AG04449 (cell line): ENCODE measurements at regions of chr17 and their contacts with region 1.

Region 1: DNA sequence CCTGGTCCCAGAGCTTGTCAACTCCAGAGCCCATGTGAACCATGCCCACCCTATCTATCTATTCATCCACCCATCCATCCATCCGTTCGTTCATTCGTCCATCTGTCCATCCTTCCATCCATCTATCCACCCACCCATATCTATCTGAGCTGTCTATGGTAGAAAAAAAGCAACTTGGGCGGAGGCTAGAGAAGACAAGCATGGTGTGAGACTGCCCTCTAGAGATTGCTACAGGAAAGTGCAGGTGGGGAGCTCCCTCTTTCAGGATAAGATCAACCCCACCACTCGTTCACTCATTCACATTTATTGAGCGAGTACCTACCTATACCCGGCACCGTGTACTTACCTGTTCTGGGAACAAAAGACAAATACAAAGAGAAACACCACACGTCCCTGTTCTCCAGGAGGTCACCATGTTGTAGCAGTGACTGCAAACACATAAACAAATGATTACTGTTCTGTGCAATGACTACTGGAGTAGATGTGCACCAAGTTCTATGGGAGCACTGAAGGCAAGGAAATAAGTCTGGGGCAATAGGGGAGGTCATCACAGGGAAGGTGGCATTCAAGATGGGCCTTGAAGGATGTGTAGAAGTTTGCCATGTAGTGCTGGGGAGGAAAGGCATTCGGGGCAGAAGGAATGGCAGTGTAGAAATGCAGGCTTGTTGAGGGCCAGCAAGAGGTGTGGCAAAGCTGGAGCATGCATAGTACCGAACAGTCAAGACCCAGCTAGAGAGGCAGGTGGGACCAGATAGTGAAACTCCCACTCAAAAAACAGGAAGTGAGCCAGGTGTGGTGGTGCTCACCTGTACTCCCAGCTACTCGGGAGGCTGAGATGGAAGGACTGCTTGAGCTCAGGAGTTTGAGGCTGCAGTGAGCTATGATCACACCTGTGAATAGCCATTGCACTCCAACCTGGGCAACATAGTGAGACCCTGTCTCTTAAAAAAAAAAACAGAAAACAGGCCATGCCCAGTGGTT is 13.4 kb upstream of the ATP5MC1 start:
- DNase-seq: no peak
- H3K4me3 ChIP-seq: no peak overlapping the region
- CTCF ChIP-seq: peak; percentile 85

Region 2: GRCh38 chr17:48678141-48678971 is 200.9 kb before region 1 on chr17:
- CTCF ChIA-PET with region 1: interaction called, 260 read pairs
- POLR2A ChIA-PET with region 1: no interaction called
- DNase-seq: no peak
- H3K4me3 ChIP-seq: peak overlapping the region; percentile 30
- CTCF ChIP-seq: peak; percentile 93

Region 3: GRCh38 chr17:48724251-48725003 is 154.8 kb before region 1 on chr17:
- CTCF ChIA-PET with region 1: interaction called, 127 read pairs
- POLR2A ChIA-PET with region 1: no interaction called
- DNase-seq: no peak
- H3K4me3 ChIP-seq: no peak overlapping the region
- CTCF ChIP-seq: peak; percentile 83

Region 4: DNA sequence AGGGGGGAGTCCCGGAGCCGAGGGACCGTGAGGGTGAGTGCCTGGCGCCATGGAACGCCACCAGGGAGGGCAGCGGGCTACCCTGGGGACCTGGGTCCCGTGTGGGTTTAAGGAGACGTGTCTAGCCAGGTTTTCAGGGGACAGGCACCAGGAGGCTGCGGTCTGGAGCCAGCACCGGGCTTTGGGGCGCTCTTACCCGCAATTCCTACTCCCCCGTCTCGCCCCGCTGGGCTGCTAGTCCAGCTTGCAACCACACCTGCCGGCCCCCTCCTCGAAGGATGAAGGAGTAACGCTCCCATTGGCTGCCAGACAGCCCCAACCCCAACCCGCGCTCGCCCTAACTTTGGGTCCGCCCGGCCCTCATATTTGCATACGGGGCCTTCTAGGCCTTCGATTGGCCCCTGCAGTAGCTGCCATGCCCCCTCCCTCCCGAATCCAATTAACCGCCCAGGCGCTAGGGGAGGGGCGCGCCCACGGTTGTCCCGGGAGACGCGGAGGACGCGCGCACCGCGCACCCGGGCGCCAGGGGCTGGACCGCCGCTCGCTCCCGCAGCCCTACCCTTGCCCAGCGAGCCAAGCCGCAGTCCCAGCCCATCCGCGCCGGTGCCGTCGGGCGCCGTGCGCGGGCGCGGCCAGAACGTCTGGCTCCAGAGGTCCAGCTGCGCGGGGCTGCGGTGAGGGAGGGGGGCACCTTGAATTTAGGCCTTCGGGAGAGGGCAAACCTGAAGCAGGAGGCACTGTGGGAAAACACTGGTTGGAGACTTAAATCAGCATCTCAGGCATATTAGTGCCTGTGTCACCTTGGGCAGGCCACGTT is 62.2 kb before region 1 on chr17 and contains the start of gene TTLL6:
- CTCF ChIA-PET with region 1: interaction called, 797 read pairs
- POLR2A ChIA-PET with region 1: no interaction called
- DNase-seq: no peak
- H3K4me3 ChIP-seq: peak within 1 kb of the TSS; percentile 45
- CTCF ChIP-seq: no peak

Region 5: GRCh38 chr17:48843172-48843900 is 35.9 kb before region 1 on chr17:
- CTCF ChIA-PET with region 1: interaction called, 37 read pairs
- POLR2A ChIA-PET with region 1: no interaction called
- DNase-seq: no peak
- H3K4me3 ChIP-seq: no peak overlapping the region
- CTCF ChIP-seq: no peak

Region 6: GRCh38 chr17:48892940-48893645 is 13.9 kb after region 1 on chr17:
- CTCF ChIA-PET with region 1: interaction called, 11 read pairs
- POLR2A ChIA-PET with region 1: no interaction called
- DNase-seq: no peak
- H3K4me3 ChIP-seq: peak overlapping the region; percentile 97
- CTCF ChIP-seq: no peak